Spleen (tissue), 13 donors: ENCODE measurements at regions of chr15 and their contacts with region 1.

Region 1: DNA sequence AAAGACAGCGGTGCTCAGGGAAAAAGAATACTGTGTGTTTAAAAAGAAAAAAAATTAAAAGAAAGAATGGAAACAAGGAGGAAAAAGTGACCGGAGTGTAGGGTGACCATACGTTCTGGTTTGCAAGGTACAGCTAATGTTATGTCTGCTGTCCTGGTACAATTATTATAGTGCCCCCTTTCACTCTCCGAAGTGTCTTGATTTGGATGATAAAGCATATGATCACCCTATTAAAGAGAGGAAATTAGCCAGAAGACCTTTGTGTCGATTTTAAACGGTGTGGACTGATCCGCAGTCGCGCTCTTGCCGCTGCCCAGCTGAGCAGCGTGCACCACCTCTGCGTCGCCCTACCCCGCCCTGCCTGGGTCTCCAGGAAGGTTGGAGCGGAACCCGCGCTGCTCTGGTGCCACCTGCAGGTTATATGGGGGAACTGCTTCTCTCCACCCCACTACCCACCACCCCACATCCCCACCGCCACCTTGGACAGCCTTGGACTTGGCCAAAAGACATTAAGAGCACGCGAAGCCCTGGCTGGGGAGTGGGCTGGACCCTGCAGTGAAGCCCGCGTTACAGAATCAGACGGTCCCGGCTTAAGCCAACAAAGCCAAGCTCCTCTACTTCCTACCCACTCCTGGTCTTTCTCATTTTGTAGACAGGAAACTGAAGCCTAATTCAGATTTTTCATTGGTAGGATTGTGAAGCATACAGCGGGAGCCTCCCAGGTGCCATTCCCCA is 41.2 kb upstream of the UBE2Q2 start:
- DNase-seq: peak; percentile 95
- H3K4me3 ChIP-seq: peak overlapping the region in 3 of 8 donors; percentile 14 to 48 (median 18)
- H3K27ac ChIP-seq: no peak overlapping the region
- H3K4me1 ChIP-seq: peaks cover 4 to 13% (median 7%) of the 10 kb centered on the region in 6 donors
- H3K27me3 ChIP-seq: peaks cover 0 to 50% (median 5%) of the 10 kb centered on the region in 7 donors
- CTCF ChIP-seq: peak; percentile 71 to 96 (median 91)
- POLR2A ChIP-seq: no peak

Region 2: DNA sequence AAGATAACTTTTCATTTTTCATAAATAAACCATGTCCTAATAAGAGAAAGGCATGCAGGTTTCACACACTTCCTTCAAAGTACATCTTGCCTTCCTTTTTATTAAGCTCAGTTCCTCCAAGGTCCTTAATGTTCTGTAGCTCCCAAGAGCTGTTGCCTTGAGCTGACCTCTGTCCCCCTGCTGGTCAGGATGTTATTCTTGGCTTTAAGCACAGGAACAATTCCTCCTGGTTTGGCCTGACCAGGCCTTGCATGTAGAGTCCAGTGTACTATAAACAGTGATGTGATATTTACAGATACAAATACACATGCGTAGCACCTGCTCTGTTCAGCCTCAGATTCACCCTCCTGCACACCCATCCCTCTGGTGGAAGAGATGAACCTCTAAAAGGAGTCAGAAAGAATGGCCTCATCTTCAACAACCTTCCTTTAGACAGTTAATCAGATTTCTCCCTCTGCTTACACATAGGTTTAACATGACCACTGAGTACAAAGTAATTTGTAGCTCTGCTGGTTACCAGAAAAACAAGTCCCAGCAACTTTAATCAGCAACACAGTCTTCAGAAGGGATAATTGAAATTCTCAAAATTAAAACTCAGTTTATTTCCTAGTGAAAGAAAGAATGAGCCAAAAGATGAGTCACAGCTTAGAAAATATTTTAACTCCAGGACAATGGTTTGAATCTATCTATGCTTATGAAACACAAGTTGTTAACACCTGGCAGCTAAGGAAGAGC is 269.4 kb before region 1 on chr15:
- intact Hi-C with region 1: no loop called
- DNase-seq: no peak
- H3K4me3 ChIP-seq: no peak overlapping the region
- H3K27ac ChIP-seq: peak overlapping the region in 4 of 8 donors; percentile 23 to 33 (median 28)
- H3K4me1 ChIP-seq: peaks cover 0 to 34% (median 14%) of the 10 kb centered on the region in 6 donors
- H3K27me3 ChIP-seq: no peaks in the 10 kb centered on the region
- CTCF ChIP-seq: peak in 6 of 11 experiments; percentile 27 to 51 (median 42)
- POLR2A ChIP-seq: no peak

Region 3: DNA sequence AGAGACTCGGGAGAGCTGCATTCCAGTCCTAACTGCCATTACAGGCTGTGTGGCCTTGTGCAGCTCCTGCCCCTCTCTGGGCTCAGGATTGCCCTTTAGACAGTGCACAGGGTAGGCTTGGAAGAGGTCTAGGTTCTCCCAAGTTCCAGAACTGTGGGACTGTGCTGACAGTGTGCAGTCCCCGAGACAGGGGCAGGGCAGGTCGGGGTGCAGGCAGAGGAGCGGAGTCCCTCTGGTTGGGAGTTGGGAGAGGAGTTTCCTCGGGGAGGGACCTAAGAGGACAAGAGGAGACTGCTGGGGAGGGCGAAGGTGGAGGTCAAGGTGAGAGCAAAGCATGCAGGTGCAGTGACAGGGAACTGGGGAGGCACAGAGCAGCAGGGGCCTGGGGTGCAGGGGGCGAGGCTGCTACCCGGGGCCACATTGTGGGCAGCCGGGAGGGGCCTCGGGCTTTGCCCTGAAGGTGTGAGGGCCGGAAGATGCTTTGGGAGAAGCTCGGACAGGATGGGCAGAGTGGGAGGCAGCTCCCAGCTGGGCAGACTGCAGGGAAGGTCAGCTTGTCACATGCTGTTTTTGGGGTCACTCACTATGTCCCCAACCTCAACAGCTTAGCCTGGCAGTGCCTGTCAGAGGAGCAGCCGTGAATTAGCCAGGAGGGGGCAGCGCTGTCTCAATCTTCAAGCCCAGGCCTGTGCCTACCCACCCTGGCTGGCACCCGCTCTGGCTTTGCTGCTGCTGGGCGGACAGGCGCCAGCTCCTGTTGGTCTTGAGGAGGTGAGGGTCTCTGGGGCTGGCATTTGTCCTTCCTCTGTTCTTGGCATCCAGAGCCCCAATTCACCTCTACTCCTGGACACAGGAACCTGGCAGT is 73.9 kb before region 1 on chr15:
- intact Hi-C with region 1: loop called (anchors 2 kb)
- DNase-seq: peak; percentile 88
- H3K4me3 ChIP-seq: no peak overlapping the region
- H3K27ac ChIP-seq: no peak overlapping the region
- H3K4me1 ChIP-seq: peaks cover 7 to 33% (median 24%) of the 10 kb centered on the region in 6 donors
- H3K27me3 ChIP-seq: peaks cover 0 to 15% (median 0%) of the 10 kb centered on the region in 7 donors
- CTCF ChIP-seq: peak in 10 of 11 experiments; percentile 46 to 83 (median 70)
- POLR2A ChIP-seq: no peak